ENCODE measurements at regions of chr4 and their contacts with region 1.

Region 1: DNA sequence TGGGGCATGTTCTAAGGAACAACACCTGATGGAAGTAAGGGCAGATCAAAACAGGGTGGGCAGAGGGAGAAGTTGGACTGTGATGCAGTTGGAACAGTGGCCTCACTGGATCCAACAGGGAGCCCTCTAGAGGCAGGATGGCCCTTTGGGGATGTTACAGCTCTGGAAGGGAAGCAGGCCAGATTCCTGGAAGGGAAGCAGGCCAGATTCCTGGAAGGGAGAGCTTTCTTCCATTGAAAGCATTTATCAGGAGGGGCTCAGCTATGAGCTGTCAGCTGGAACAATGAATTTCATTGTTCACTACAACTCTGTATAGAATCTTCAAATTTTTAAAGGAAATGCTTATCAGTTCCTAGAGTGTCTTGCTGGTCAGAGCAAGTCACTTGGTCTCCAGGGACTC is 17.7 kb downstream of the IL15 start:
- DNase-seq: no peak
- CTCF ChIP-seq: peak; percentile 37

Region 2: DNA sequence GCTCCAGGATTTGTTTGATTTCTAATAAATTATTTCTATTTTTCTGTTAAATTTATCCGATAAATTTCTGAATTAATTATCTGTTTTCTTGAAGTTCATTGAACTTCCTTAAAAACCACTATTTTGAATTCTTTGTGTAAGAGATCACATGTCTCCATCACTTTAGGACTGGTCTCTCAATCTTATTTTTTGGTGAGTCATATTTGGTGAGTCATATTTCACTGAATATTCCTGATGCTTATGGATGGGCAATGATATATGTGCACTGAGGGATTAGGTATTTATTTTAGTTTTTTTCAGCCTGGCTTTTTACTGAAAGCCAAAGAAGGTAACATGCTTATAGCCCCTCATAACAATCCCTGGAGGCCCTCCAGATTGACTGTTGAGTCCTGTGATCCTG is 66.2 kb before region 1 on chr4:
- CTCF ChIA-PET with region 1: no interaction called
- POLR2A ChIA-PET with region 1: no interaction called
- DNase-seq: no peak
- CTCF ChIP-seq: no peak

Region 3: GRCh38 chr4:141643557-141643956 is 10.5 kb before region 1 on chr4:
- CTCF ChIA-PET with region 1: interaction called, 15 read pairs
- POLR2A ChIA-PET with region 1: no interaction called
- DNase-seq: no peak
- CTCF ChIP-seq: no peak

Region 4: DNA sequence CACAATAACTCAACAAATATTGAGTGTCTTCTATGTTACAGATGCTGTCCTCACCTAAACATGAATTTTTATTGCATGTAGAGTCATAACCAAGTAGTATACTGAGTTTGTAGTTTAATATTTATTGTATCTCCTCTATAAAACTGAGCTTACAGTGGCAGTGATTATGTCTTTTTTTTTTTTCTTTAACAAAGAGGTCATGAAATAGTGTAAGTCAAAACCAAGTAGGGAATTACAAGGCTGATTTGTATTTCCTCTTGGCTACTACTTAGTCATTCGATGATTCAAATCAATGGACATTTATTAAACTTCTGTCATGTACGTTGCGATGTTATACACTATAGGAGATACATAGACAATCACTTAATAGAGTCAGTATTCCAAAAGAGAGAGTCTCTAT is 30.7 kb after region 1 on chr4:
- CTCF ChIA-PET with region 1: no interaction called
- POLR2A ChIA-PET with region 1: no interaction called
- DNase-seq: no peak
- CTCF ChIP-seq: no peak